Mammary epithelial cell (primary cell): ENCODE measurements at regions of chr10 and their contacts with region 1.

Region 1: GRCh38 chr10:17368708-17369272 is 85.6 kb downstream of the ST8SIA6 start:
- DNase-seq: peak; percentile 78
- H3K4me3 ChIP-seq: no peak overlapping the region
- H3K27ac ChIP-seq: no peak overlapping the region
- H3K4me1 ChIP-seq: no peaks in the 10 kb centered on the region
- H3K27me3 ChIP-seq: no peaks in the 10 kb centered on the region
- CTCF ChIP-seq: no peak

Region 2: GRCh38 chr10:17278607-17279240 is 90.1 kb before region 1 on chr10:
- CTCF ChIA-PET with region 1: no interaction called
- dilution Hi-C with region 1: loop called (anchors 5 kb)
- in situ Hi-C with region 1: no loop called
- intact Hi-C with region 1: no loop called
- DNase-seq: no peak
- H3K4me3 ChIP-seq: no peak overlapping the region
- H3K27ac ChIP-seq: no peak overlapping the region
- H3K4me1 ChIP-seq: no peaks in the 10 kb centered on the region
- H3K27me3 ChIP-seq: no peaks in the 10 kb centered on the region
- CTCF ChIP-seq: no peak

Region 3: GRCh38 chr10:17348501-17349349 is 20.1 kb before region 1 on chr10:
- CTCF ChIA-PET with region 1: no interaction called
- dilution Hi-C with region 1: no loop called
- in situ Hi-C with region 1: no loop called
- intact Hi-C with region 1: loop called (anchors 2 kb)
- DNase-seq: peak; percentile 95
- H3K4me3 ChIP-seq: peak overlapping the region in 2 of 3 experiments; percentile 14 to 21
- H3K27ac ChIP-seq: peak overlapping the region; percentile 64
- H3K4me1 ChIP-seq: peaks cover 26% of the 10 kb centered on the region
- H3K27me3 ChIP-seq: no peaks in the 10 kb centered on the region
- CTCF ChIP-seq: no peak

Region 4: GRCh38 chr10:17409170-17409733 is 40.5 kb after region 1 on chr10:
- CTCF ChIA-PET with region 1: no interaction called
- dilution Hi-C with region 1: no loop called
- in situ Hi-C with region 1: no loop called
- intact Hi-C with region 1: no loop called
- DNase-seq: no peak
- H3K4me3 ChIP-seq: no peak overlapping the region
- H3K27ac ChIP-seq: no peak overlapping the region
- H3K4me1 ChIP-seq: no peaks in the 10 kb centered on the region
- H3K27me3 ChIP-seq: peaks cover 2% of the 10 kb centered on the region
- CTCF ChIP-seq: peak; percentile 53 to 54

Region 5: DNA sequence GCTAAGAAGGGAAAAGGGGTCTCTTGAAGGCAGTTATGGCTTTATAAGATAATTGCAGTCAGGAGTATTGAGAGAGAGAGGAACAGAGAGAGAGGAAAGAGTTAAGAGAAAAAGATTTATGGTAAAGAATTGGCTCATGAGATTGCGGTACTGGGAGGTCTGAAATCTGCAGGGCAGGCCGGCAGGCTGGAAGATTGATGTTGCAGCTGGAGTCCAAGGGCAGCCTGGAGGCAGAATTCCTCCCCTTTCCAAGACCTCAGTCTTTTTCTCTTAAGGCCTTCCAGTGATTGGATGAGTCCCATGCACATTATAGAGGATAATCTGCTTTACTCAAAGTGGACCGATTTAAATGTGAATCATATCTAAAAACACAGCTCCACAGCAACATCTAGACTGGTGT is 180.0 kb after region 1 on chr10:
- CTCF ChIA-PET with region 1: interaction called, 23 read pairs
- dilution Hi-C with region 1: no loop called
- in situ Hi-C with region 1: no loop called
- intact Hi-C with region 1: no loop called
- DNase-seq: no peak
- H3K4me3 ChIP-seq: no peak overlapping the region
- H3K27ac ChIP-seq: no peak overlapping the region
- H3K4me1 ChIP-seq: no peaks in the 10 kb centered on the region
- H3K27me3 ChIP-seq: no peaks in the 10 kb centered on the region
- CTCF ChIP-seq: no peak